PC-9 (cell line): ENCODE measurements at regions of chr1 and their contacts with region 1.

Region 1: GRCh38 chr1:35398739-35399138 is 130.2 kb downstream of the ZMYM4 start:
- DNase-seq: no peak
- H3K4me3 ChIP-seq: no peak overlapping the region
- H3K27ac ChIP-seq: no peak overlapping the region
- H3K4me1 ChIP-seq: no peaks in the 10 kb centered on the region
- H3K27me3 ChIP-seq: no peaks in the 10 kb centered on the region
- CTCF ChIP-seq: no peak

Region 2: DNA sequence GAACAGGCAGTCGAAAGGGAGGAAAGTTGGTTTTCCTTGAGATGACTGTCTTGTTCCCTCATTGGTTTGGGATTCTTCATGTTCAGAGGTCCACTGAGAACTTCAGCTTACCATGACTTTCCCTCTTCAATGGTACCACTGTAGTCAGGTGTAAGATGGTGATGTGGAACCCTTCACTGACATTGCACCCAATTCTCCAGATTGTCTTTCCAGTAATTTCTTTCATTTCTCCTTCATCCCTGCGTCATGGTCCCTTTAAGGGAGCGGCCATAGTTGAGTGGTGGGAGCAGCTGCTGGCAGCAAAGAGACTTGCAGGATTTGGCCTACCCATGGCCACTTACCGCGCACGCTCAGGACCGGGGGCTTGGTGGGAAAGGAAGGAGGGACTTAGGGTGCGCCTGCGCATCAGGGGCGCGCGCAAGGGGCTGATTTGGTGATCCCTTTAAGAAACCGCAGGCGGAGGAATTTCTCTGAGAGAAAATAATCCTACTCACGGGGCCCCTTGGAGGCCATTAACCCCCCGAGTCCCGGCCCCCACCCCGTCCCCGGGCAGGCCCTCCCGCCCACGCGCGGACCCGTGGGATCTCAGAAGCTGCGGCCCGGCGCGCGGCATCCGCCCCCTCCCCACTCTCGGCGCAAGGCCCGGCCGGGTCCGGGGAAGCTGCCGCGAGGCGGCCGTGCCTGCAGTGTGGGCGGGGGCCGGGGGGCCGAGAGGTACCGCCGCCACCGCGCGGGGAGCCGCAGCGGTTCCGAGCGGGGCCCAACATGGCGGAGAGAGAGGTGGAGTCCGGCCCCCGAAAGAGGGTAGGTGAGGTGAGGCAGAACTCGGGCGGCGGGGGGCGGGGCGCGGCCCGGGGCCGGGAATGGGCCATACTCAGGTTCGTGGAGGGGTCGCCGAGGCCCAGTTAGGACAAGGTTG is 130.2 kb before region 1 on chr1 and contains the start of gene ZMYM4:
- CTCF ChIA-PET with region 1: interaction called, 11 read pairs
- POLR2A ChIA-PET with region 1: no interaction called
- intact Hi-C with region 1: no loop called
- DNase-seq: peak; percentile 92 to 95
- H3K4me3 ChIP-seq: peak within 1 kb of the TSS; percentile 71
- H3K27ac ChIP-seq: peak within 1 kb of the TSS; percentile 71
- H3K4me1 ChIP-seq: peaks cover 35% of the 10 kb centered on the region
- H3K27me3 ChIP-seq: no peaks in the 10 kb centered on the region
- CTCF ChIP-seq: no peak
- total RNA-seq, gene ZMYM4: 55.6 and 84.4 TPM in 2 replicates

Region 3: GRCh38 chr1:35364741-35365140 is 34.0 kb before region 1 on chr1:
- CTCF ChIA-PET with region 1: no interaction called
- POLR2A ChIA-PET with region 1: no interaction called
- intact Hi-C with region 1: no loop called
- DNase-seq: no peak
- H3K4me3 ChIP-seq: no peak overlapping the region
- H3K27ac ChIP-seq: no peak overlapping the region
- H3K4me1 ChIP-seq: no peaks in the 10 kb centered on the region
- H3K27me3 ChIP-seq: no peaks in the 10 kb centered on the region
- CTCF ChIP-seq: no peak